ENCODE measurements at regions of chr15 and their contacts with region 1.

Region 1: GRCh38 chr15:59074607-59075006 is 30.3 kb upstream of the CCNB2 start:
- DNase-seq: no peak
- H3K4me3 ChIP-seq: no peak overlapping the region
- H3K4me3 Mint-ChIP-seq: no peak overlapping the region
- H3K27ac Mint-ChIP-seq: no peak overlapping the region
- H3K4me1 ChIP-seq: 0 out of 2 replicates have a peak, but pooled peaks cover 9% of the 10 kb centered on the region
- H3K4me1 Mint-ChIP-seq: peaks cover 2% of the 10 kb centered on the region
- H3K27me3 ChIP-seq: no peaks in the 10 kb centered on the region
- H3K27me3 Mint-ChIP-seq: no peaks in the 10 kb centered on the region
- CTCF ChIP-seq: no peak

Region 2: GRCh38 chr15:59087731-59088130 is 13.1 kb after region 1 on chr15:
- CTCF ChIA-PET with region 1: interaction called, 3 read pairs
- POLR2A ChIA-PET with region 1: interaction called, 12 read pairs
- intact Hi-C with region 1: no loop called
- DNase-seq: no peak
- H3K4me3 ChIP-seq: no peak overlapping the region
- H3K4me3 Mint-ChIP-seq: no peak overlapping the region
- H3K27ac Mint-ChIP-seq: no peak overlapping the region
- H3K4me1 ChIP-seq: no peaks in the 10 kb centered on the region
- H3K4me1 Mint-ChIP-seq: no peaks in the 10 kb centered on the region
- H3K27me3 ChIP-seq: no peaks in the 10 kb centered on the region
- H3K27me3 Mint-ChIP-seq: no peaks in the 10 kb centered on the region
- CTCF ChIP-seq: no peak

Measured in Caco-2 (cell line).